Activated CD8-positive, alpha-beta T cell treated with anti-CD3 and anti-CD28 coated beads for 36 hours (primary cell): ENCODE measurements at regions of chr10 and their contacts with region 1.

Region 1: DNA sequence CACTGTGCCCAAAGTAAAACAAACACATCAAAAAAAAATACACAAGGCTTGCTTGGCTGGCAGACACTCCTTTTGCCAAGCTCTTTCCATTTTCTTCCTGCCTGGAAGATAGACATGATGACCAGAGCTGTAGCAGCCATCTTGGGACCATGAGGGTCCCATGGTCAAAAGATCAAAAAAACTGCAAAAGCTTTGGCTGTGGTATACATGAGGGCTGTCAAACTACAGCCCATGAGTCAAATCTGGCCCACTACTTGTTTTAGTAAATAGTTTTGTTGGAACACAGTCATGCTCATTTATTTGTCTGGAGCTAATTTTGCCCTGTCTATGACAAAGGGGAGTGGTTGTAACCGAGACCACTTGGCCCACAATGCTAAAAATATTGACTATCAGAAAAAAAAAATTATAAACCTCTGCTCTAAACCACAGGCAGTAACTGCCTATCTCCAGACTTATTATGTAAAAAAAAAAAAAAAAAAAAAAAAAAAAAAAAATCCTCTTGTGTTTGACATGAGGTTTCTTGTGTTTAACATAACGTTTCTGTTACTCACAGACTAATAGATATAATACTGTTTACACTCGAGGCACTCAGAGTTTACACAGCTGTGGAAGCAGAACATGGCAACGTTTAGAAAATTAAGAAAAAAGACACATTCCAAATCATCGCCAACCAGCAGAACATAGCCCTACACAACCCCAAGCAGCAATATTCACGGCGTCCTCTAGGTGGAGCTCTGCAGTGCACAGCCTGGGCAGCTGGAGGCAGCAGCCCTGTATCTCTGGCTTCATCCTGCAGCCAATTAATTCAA is 36.9 kb downstream of the ASB13 start:
- DNase-seq: peak; percentile 93
- ATAC-seq: peak; percentile 92
- H3K4me3 Mint-ChIP-seq: peak overlapping the region; percentile 22
- H3K27ac Mint-ChIP-seq: peak overlapping the region; percentile 75
- H3K4me1 Mint-ChIP-seq: peaks cover 16% of the 10 kb centered on the region
- H3K27me3 Mint-ChIP-seq: peaks cover 6% of the 10 kb centered on the region
- CTCF ChIP-seq: peak; percentile 99

Region 2: GRCh38 chr10:5446390-5446926 is 183.0 kb before region 1 on chr10:
- CTCF ChIA-PET with region 1: interaction called, 22 read pairs
- POLR2A ChIA-PET with region 1: interaction called, 3 read pairs
- intact Hi-C with region 1: loop called (anchors 2 kb)
- DNase-seq: peak; percentile 88
- ATAC-seq: peak; percentile 72
- H3K4me3 Mint-ChIP-seq: peak overlapping the region; percentile 79
- H3K27ac Mint-ChIP-seq: peak overlapping the region; percentile 75
- H3K4me1 Mint-ChIP-seq: peaks cover 49% of the 10 kb centered on the region
- H3K27me3 Mint-ChIP-seq: peaks cover 5% of the 10 kb centered on the region
- CTCF ChIP-seq: no peak

Region 3: DNA sequence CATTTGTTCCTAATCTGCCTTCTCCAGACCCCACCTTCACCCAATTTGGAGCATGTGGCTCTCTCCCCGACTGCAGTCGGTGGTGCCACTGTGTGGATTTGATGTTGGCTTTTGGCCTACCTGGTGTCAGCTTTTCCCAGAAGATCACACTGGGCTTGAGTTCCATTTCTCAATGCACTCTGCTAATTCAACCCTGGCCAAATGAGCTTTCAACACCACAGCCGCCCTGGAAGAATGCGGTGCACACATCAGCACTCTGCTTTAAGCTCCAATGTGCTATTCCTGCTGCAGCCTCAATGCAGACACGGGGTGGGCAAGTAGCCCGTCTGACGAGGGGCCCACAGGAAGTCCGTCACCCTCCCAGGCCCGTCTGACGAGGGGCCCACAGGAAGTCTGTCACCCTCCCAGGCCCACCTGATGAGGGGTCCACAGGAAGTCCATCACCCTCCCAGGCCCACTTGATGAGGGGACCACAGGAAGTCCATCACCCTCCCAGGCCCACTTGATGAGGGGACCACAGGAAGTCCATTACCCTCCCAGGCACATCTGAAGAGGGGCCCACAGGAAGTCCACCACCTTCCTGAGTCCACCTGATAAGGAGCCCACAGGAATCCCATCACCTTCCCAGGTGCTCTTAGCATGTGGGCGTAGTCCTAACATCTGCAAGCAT is 27.5 kb before region 1 on chr10:
- CTCF ChIA-PET with region 1: interaction called, 10 read pairs
- POLR2A ChIA-PET with region 1: no interaction called
- intact Hi-C with region 1: no loop called
- DNase-seq: no peak
- ATAC-seq: no peak
- H3K4me3 Mint-ChIP-seq: no peak overlapping the region
- H3K27ac Mint-ChIP-seq: no peak overlapping the region
- H3K4me1 Mint-ChIP-seq: no peaks in the 10 kb centered on the region
- H3K27me3 Mint-ChIP-seq: no peaks in the 10 kb centered on the region
- CTCF ChIP-seq: no peak

Region 4: DNA sequence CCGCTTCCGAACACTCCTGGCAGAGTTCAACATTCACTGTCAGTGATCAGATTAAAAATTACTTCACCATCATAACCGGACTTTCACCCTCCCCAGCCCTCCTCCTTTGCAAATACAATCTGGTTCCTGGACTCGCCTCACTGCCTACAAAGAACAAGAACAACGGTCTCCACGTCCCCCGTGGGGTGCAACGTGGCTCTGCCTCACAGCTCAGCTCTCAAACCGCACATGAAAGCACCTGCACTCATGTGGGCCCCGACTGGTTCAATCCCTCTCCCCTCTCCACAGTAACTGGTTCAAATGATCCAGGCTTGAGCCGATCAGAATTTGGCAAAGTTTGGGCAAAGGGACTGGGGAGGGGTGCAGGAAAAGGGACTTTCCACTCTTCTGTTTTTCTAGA is 15.9 kb after region 1 on chr10:
- CTCF ChIA-PET with region 1: interaction called, 26 read pairs
- POLR2A ChIA-PET with region 1: interaction called, 3 read pairs
- intact Hi-C with region 1: no loop called
- DNase-seq: no peak
- ATAC-seq: no peak
- H3K4me3 Mint-ChIP-seq: no peak overlapping the region
- H3K27ac Mint-ChIP-seq: no peak overlapping the region
- H3K4me1 Mint-ChIP-seq: no peaks in the 10 kb centered on the region
- H3K27me3 Mint-ChIP-seq: no peaks in the 10 kb centered on the region
- CTCF ChIP-seq: no peak

Region 5: DNA sequence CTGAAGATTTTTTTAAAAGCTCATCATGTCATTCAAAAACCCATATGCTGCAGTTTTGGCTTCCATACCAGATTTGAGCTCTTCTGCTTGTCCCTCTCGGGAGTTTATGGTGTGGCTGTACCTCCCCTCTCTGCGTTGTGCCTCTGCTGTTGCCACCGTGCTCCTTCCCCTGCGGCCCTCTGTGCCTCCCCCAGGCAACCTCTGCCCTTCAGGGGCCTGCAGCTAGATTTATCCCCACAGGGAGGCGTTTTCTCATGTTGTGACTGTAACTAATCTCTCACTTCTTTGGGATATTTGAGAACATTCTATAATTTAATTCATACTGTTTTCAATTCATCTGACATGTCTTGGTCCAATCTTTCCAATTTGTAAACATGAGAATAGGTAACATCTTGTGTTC is 107.8 kb after region 1 on chr10:
- CTCF ChIA-PET with region 1: no interaction called
- POLR2A ChIA-PET with region 1: no interaction called
- intact Hi-C with region 1: no loop called
- DNase-seq: no peak
- ATAC-seq: no peak
- H3K4me3 Mint-ChIP-seq: no peak overlapping the region
- H3K27ac Mint-ChIP-seq: peak overlapping the region; percentile 4
- H3K4me1 Mint-ChIP-seq: peaks cover 9% of the 10 kb centered on the region
- H3K27me3 Mint-ChIP-seq: no peaks in the 10 kb centered on the region
- CTCF ChIP-seq: no peak

Region 6: GRCh38 chr10:5873515-5873995 is 244.0 kb after region 1 on chr10:
- CTCF ChIA-PET with region 1: interaction called, 11 read pairs
- POLR2A ChIA-PET with region 1: no interaction called
- intact Hi-C with region 1: no loop called
- DNase-seq: peak; percentile 80
- ATAC-seq: peak; percentile 98
- H3K4me3 Mint-ChIP-seq: peak overlapping the region; percentile 6
- H3K27ac Mint-ChIP-seq: peak overlapping the region; percentile 21
- H3K4me1 Mint-ChIP-seq: peaks cover 6% of the 10 kb centered on the region
- H3K27me3 Mint-ChIP-seq: no peaks in the 10 kb centered on the region
- CTCF ChIP-seq: peak; percentile 73